GM13976 (cell line): ENCODE measurements at regions of chr12 and their contacts with region 1.

Region 1: DNA sequence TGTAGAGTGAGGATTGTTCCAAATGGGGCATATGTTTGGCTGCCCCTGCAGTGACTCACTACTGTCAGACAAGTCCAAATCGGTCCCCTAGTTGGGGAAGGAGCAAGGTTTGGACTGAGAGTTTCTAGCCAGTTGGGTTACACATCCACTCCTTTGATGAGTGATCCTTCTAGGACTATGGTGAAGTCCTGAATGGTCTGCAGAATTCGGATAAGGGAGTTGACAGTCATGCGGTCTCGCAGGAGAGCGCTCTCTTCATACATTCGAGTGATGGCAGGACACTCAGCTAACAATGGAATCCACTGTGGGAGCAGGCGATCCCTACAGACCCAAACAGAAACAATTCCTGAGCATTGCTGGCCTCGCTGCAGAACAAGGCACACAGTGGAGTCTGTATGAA is 61.5 kb upstream of the SINHCAF start:
- DNase-seq: no peak
- CTCF ChIP-seq: no peak

Region 2: DNA sequence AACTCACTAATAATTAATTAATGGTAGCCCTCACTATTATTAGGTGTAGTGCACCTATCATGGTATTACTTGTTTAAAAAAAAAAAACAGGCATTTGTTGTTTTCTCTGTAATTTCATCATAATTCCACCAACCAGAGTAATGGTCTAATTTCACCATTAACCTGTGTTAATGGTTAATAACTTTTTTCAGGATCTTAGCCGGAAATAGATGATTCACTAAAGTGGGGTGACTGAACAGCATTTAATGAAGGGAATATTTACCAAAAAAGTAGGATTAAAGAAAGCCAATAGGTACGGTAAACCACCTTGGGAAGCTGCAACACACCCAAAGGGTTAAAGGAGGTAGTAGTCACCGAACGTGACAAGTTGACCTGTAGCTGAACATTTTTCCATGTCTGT is 285.1 kb after region 1 on chr12:
- in situ Hi-C with region 1: no loop called
- DNase-seq: no peak
- CTCF ChIP-seq: no peak

Region 3: DNA sequence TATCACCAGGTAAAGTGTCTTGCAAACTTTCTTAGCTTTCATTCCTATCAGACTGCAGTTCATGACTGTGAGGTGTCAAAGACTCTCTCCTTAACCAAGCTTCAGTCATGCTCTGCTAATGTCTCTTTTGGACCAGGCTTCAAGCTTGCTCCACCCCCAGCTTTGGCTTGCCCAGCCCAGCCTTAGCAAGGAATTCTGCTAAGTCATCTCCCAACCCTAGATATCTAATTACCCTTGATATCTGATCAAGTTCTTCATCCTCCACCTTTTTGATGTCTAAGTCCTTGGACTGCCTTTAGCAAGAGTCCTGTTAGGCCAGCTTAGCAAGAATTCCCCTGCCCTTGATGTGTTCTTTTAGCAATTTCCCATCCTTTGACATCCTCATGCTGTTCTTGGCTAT is 902.9 kb after region 1 on chr12:
- in situ Hi-C with region 1: loop called (anchors 25 kb)
- DNase-seq: no peak
- CTCF ChIP-seq: no peak